PC-9 (cell line): ENCODE measurements at regions of chr20 and their contacts with region 1.

Region 1: GRCh38 chr20:41339507-41340326 is 904 bp upstream of the LPIN3 start:
- DNase-seq: peak; percentile 80 to 97
- H3K4me3 ChIP-seq: peak overlapping the region; percentile 54
- H3K27ac ChIP-seq: no peak overlapping the region
- H3K4me1 ChIP-seq: peaks cover 15% of the 10 kb centered on the region
- H3K27me3 ChIP-seq: no peaks in the 10 kb centered on the region
- CTCF ChIP-seq: peak; percentile 100

Region 2: GRCh38 chr20:40902661-40903060 is 437.1 kb before region 1 on chr20:
- CTCF ChIA-PET with region 1: no interaction called
- POLR2A ChIA-PET with region 1: no interaction called
- intact Hi-C with region 1: no loop called
- DNase-seq: no peak
- H3K4me3 ChIP-seq: no peak overlapping the region
- H3K27ac ChIP-seq: no peak overlapping the region
- H3K4me1 ChIP-seq: no peaks in the 10 kb centered on the region
- H3K27me3 ChIP-seq: peaks cover 54% of the 10 kb centered on the region
- CTCF ChIP-seq: no peak

Region 3: GRCh38 chr20:41017390-41018042 is 322.2 kb before region 1 on chr20:
- CTCF ChIA-PET with region 1: no interaction called
- POLR2A ChIA-PET with region 1: no interaction called
- intact Hi-C with region 1: no loop called
- DNase-seq: peak; percentile 50 to 87
- H3K4me3 ChIP-seq: no peak overlapping the region
- H3K27ac ChIP-seq: peak overlapping the region; percentile 70
- H3K4me1 ChIP-seq: peaks cover 53% of the 10 kb centered on the region
- H3K27me3 ChIP-seq: no peaks in the 10 kb centered on the region
- CTCF ChIP-seq: 0 out of 2 replicates have a peak, but pooled peaks have one; percentile 14

Region 4: DNA sequence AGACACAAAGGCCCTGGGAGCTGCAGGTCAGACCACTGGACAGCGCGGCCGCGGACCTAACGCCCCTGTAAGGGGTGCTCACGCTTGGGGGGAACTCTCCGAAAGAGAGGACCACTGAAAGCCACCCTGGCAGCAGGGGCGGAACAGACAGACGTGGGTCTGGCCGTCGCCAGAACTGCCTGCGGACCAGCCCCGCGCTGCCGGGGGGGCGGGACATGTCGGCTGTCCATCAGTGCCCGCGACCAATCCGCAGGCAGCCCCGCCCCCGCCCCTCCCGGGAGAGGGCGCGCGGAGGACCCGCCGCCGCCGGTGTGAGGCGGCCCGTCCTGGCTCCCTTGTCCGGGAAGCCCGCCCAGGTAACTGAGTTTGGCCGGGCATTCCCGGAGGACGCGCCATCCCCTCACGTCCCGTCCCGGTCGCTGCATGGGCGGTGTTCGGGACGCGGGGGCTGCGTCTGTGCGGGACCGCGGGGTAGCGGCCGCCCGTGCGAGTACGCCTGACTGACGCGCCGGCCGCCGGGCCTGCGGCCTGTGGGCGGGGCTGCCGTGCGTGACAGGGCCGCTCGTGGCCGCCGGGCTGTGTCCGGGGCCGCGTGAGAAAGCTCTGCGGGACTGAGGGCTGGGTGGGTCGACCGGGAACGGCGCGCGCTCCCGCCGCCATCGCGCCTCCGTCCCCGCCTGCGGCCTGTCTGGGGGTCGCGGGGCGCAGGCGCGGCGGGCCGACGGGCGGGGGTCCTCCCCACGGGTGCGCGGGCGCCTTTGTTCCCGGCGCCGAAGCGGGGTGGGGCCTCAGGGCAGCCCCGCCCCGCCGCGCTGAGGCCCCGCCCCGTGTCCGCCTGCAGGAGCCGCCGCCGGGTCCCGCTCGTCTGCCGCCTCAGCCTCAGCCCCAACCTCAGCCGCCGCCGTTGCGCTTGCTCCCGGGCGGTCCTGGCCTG is 202.8 kb before region 1 on chr20 and contains the start of gene PLCG1:
- CTCF ChIA-PET with region 1: interaction called, 5 read pairs
- POLR2A ChIA-PET with region 1: interaction called, 20 read pairs
- intact Hi-C with region 1: loop called (anchors 1 kb)
- DNase-seq: peak; percentile 62 to 92
- H3K4me3 ChIP-seq: peak within 1 kb of the TSS; percentile 94
- H3K27ac ChIP-seq: no peak within 1 kb of the TSS
- H3K4me1 ChIP-seq: peaks cover 15% of the 10 kb centered on the region
- H3K27me3 ChIP-seq: no peaks in the 10 kb centered on the region
- CTCF ChIP-seq: no peak
- total RNA-seq, gene PLCG1: 64.1 and 69.4 TPM in 2 replicates

Region 5: GRCh38 chr20:41232973-41233926 is 106.5 kb before region 1 on chr20:
- CTCF ChIA-PET with region 1: no interaction called
- POLR2A ChIA-PET with region 1: no interaction called
- intact Hi-C with region 1: loop called (anchors 1 kb)
- DNase-seq: peak in 1 of 2 experiments; percentile 45
- H3K4me3 ChIP-seq: peak overlapping the region; percentile 45; the same call in 1 of the 2 replicates
- H3K27ac ChIP-seq: no peak overlapping the region
- H3K4me1 ChIP-seq: peaks cover 11% of the 10 kb centered on the region
- H3K27me3 ChIP-seq: no peaks in the 10 kb centered on the region
- CTCF ChIP-seq: no peak

Region 6: DNA sequence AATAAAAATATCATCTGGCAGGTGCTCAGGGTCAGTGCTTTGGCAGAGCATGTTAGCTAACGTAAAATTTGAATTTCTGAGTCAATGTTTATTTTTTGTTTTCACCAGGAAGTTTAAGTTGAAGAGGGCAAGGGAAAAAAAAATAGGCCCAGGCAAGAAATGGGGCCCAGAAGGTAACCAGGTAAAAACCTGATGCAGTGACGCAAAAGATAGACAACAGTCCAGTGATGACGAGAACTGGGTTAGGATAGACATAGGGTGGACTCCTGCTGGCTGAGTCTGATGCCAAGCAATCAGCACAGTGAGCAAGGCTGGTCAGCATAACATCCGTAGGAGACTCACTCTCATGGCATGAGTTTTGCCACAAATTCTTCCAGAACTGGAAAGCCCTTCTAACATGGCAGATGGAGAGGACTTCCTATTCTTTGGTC is 64.4 kb before region 1 on chr20:
- CTCF ChIA-PET with region 1: no interaction called
- POLR2A ChIA-PET with region 1: no interaction called
- intact Hi-C with region 1: no loop called
- DNase-seq: no peak
- H3K4me3 ChIP-seq: no peak overlapping the region
- H3K27ac ChIP-seq: no peak overlapping the region
- H3K4me1 ChIP-seq: no peaks in the 10 kb centered on the region
- H3K27me3 ChIP-seq: no peaks in the 10 kb centered on the region
- CTCF ChIP-seq: no peak

Region 7: GRCh38 chr20:41317536-41318270 is 22.0 kb before region 1 on chr20 and contains the start of gene ZHX3:
- CTCF ChIA-PET with region 1: interaction called, 5 read pairs
- POLR2A ChIA-PET with region 1: no interaction called
- intact Hi-C with region 1: loop called (anchors 1 kb)
- DNase-seq: peak; percentile 87 to 99
- H3K4me3 ChIP-seq: peak within 1 kb of the TSS; percentile 83
- H3K27ac ChIP-seq: peak within 1 kb of the TSS; percentile 51
- H3K4me1 ChIP-seq: peaks cover 32% of the 10 kb centered on the region
- H3K27me3 ChIP-seq: no peaks in the 10 kb centered on the region
- CTCF ChIP-seq: no peak
- total RNA-seq, gene ZHX3: 21.5 and 23.3 TPM in 2 replicates

Region 8: DNA sequence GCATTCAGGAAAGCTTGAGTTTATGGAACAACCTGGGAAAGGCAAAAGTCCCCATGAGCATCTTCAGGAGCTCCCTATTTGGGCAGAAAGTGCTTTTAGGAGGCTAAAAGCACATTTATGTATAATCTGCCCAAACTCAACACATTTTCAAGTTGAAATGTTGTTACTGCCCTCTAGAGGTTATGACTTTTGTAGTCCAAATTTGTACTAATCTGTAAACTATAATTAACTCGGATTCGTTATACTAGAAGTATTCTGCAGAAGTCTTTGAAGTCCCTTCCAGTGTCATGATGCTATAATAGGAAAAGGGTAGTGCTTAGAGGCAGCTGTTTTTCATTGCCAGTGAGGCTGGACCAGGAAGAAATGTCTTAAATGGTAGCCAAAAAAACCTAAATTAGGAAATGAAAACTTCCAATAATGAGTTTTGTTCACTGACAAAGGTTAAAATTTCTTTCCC is 71.7 kb after region 1 on chr20:
- CTCF ChIA-PET with region 1: interaction called, 9 read pairs
- POLR2A ChIA-PET with region 1: no interaction called
- intact Hi-C with region 1: loop called (anchors 2 kb)
- DNase-seq: no peak
- H3K4me3 ChIP-seq: no peak overlapping the region
- H3K27ac ChIP-seq: no peak overlapping the region
- H3K4me1 ChIP-seq: no peaks in the 10 kb centered on the region
- H3K27me3 ChIP-seq: no peaks in the 10 kb centered on the region
- CTCF ChIP-seq: peak; percentile 70

Region 9: GRCh38 chr20:41436679-41437078 is 97.0 kb after region 1 on chr20:
- CTCF ChIA-PET with region 1: no interaction called
- POLR2A ChIA-PET with region 1: no interaction called
- intact Hi-C with region 1: no loop called
- DNase-seq: no peak
- H3K4me3 ChIP-seq: no peak overlapping the region
- H3K27ac ChIP-seq: no peak overlapping the region
- H3K4me1 ChIP-seq: no peaks in the 10 kb centered on the region
- H3K27me3 ChIP-seq: no peaks in the 10 kb centered on the region
- CTCF ChIP-seq: no peak

Region 10: GRCh38 chr20:41693136-41693979 is 353.6 kb after region 1 on chr20:
- CTCF ChIA-PET with region 1: interaction called, 9 read pairs
- POLR2A ChIA-PET with region 1: no interaction called
- intact Hi-C with region 1: loop called (anchors 1 kb)
- DNase-seq: peak; percentile 76 to 87
- H3K4me3 ChIP-seq: peak overlapping the region; percentile 83
- H3K27ac ChIP-seq: peak overlapping the region; percentile 52
- H3K4me1 ChIP-seq: peaks cover 12% of the 10 kb centered on the region
- H3K27me3 ChIP-seq: peaks cover 15% of the 10 kb centered on the region; the same call in 1 of the 2 replicates
- CTCF ChIP-seq: peak; percentile 66; the same call in 1 of the 2 replicates